IMR-90 (cell line): ENCODE measurements at regions of chr3 and their contacts with region 1.

Region 1: DNA sequence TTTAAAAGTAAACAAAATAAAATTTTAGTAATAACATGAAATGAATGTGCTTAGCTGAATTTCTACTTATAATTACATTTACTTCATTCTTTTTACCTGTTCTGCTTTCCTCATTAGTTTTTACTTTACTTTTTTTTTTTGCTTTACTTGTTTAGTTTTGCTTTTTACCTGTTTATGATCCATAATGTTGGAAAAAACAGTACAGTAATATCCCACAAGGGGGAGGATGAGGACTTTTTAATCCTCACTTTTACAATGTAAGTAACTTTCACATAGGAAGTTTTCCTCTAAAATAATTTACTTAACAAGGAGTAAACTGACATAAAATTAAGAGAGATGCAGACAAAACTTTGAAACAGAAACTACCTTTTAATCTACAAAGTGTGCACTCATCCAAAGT is 268.7 kb downstream of the TBC1D5 start:
- DNase-seq: peak; percentile 23
- ATAC-seq: no peak
- H3K4me3 ChIP-seq: no peak overlapping the region
- H3K27ac ChIP-seq: no peak overlapping the region
- H3K4me1 ChIP-seq: no peaks in the 10 kb centered on the region; the same call in 1 of the 2 replicates
- H3K27me3 ChIP-seq: no peaks in the 10 kb centered on the region
- CTCF ChIP-seq: peak; percentile 41
- POLR2A ChIP-seq: no peak
- RAD21 ChIP-seq: peak; percentile 40; the same call in 1 of the 2 replicates

Region 2: GRCh38 chr3:16897254-16897926 is 576.4 kb before region 1 on chr3:
- CTCF ChIA-PET with region 1: no interaction called
- POLR2A ChIA-PET with region 1: no interaction called
- dilution Hi-C with region 1: no loop called
- in situ Hi-C with region 1: no loop called
- intact Hi-C with region 1: loop called (anchors 5 kb)
- DNase-seq: peak; percentile 23
- ATAC-seq: no peak
- H3K4me3 ChIP-seq: no peak overlapping the region
- H3K27ac ChIP-seq: no peak overlapping the region
- H3K4me1 ChIP-seq: no peaks in the 10 kb centered on the region; the same call in 1 of the 2 replicates
- H3K27me3 ChIP-seq: no peaks in the 10 kb centered on the region; the same call in 1 of the 2 replicates
- CTCF ChIP-seq: no peak
- POLR2A ChIP-seq: no peak
- RAD21 ChIP-seq: no peak

Region 3: GRCh38 chr3:17535274-17535673 is 61.5 kb after region 1 on chr3:
- CTCF ChIA-PET with region 1: no interaction called
- POLR2A ChIA-PET with region 1: no interaction called
- dilution Hi-C with region 1: no loop called
- in situ Hi-C with region 1: no loop called
- intact Hi-C with region 1: no loop called
- DNase-seq: no peak
- ATAC-seq: no peak
- H3K4me3 ChIP-seq: no peak overlapping the region
- H3K27ac ChIP-seq: no peak overlapping the region
- H3K4me1 ChIP-seq: no peaks in the 10 kb centered on the region
- H3K27me3 ChIP-seq: no peaks in the 10 kb centered on the region
- CTCF ChIP-seq: no peak
- POLR2A ChIP-seq: no peak
- RAD21 ChIP-seq: no peak